H1 (cell line): ENCODE measurements at regions of chr15 and their contacts with region 1.

Region 1: GRCh38 chr15:75647370-75648155 is at the start of gene SNX33:
- DNase-seq: peak; percentile 76 to 85
- H3K4me3 ChIP-seq: peak within 1 kb of the TSS; percentile 63 to 90 (median 72)
- H3K27ac ChIP-seq: peak within 1 kb of the TSS; percentile 82
- H3K4me1 ChIP-seq: peaks cover 9 to 29% (median 16%) of the 10 kb centered on the region in 4 experiments
- H3K27me3 ChIP-seq: peaks cover 0 to 14% (median 10%) of the 10 kb centered on the region in 4 experiments; a peak in 6 of 7 replicates
- CTCF ChIP-seq: peak; percentile 36 to 57 (median 44)
- EP300 ChIP-seq: no peak; a peak in 1 of 3 replicates
- POLR2A ChIP-seq: no peak; a peak in 1 of 3 replicates
- RAD21 ChIP-seq: peak; percentile 16 to 40; a peak in 3 of 4 replicates
- total RNA-seq, gene SNX33: 22.9 and 24.8 TPM in 2 replicates

Region 2: GRCh38 chr15:75542386-75542797 is 105.2 kb before region 1 on chr15:
- CTCF ChIA-PET with region 1: no interaction called
- POLR2A ChIA-PET with region 1: no interaction called
- DNase-seq: no peak
- H3K4me3 ChIP-seq: no peak overlapping the region
- H3K27ac ChIP-seq: no peak overlapping the region
- H3K4me1 ChIP-seq: no peaks in the 10 kb centered on the region
- H3K27me3 ChIP-seq: no peaks in the 10 kb centered on the region
- CTCF ChIP-seq: no peak
- EP300 ChIP-seq: no peak
- POLR2A ChIP-seq: no peak
- RAD21 ChIP-seq: no peak

Region 3: DNA sequence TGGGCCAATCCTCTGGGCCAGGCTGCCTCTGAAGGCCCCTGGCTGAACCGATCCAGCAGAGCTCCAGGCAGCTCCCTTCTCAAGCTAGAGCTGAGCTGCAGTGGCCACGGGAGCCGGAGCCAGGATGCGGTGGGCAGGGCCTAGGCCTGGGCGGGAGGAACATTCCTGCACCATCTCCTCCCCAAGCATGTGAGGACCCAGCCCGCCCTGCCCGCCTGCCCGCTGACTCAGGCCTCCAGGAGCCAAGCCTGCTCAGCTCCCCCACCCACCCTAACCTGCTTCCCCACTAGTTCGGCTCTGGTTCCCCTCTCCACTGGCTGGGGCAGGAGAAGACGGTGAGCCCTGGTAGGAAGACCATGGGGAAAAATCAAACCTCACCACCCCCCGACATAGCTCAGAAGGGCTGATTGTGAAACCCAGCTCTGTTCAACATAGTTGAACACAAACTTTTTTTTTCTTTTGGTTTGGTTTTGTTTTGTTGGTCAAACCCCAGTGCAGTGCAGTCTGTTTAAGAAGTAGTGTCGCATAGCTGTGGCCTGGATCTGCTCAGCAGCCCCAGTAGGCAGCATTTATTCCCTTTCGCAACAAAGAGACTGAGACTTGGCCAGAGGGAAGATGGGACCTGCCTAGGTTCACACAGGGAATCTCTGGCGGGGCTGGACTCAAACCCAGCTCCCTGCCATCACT is 13.7 kb after region 1 on chr15:
- CTCF ChIA-PET with region 1: interaction called, 5 read pairs
- POLR2A ChIA-PET with region 1: interaction called, 10 read pairs
- DNase-seq: peak; percentile 36 to 64
- H3K4me3 ChIP-seq: no peak overlapping the region
- H3K27ac ChIP-seq: no peak overlapping the region
- H3K4me1 ChIP-seq: peaks cover 0 to 6% (median 2%) of the 10 kb centered on the region in 4 experiments; a peak in 2 of 7 replicates
- H3K27me3 ChIP-seq: peaks cover 0 to 3% (median 0%) of the 10 kb centered on the region in 4 experiments; a peak in 1 of 7 replicates
- CTCF ChIP-seq: no peak
- EP300 ChIP-seq: no peak
- POLR2A ChIP-seq: no peak
- RAD21 ChIP-seq: no peak